Naive thymus-derived CD4-positive, alpha-beta T cell (primary cell): ENCODE measurements at regions of chr9 and their contacts with region 1.

Region 1: DNA sequence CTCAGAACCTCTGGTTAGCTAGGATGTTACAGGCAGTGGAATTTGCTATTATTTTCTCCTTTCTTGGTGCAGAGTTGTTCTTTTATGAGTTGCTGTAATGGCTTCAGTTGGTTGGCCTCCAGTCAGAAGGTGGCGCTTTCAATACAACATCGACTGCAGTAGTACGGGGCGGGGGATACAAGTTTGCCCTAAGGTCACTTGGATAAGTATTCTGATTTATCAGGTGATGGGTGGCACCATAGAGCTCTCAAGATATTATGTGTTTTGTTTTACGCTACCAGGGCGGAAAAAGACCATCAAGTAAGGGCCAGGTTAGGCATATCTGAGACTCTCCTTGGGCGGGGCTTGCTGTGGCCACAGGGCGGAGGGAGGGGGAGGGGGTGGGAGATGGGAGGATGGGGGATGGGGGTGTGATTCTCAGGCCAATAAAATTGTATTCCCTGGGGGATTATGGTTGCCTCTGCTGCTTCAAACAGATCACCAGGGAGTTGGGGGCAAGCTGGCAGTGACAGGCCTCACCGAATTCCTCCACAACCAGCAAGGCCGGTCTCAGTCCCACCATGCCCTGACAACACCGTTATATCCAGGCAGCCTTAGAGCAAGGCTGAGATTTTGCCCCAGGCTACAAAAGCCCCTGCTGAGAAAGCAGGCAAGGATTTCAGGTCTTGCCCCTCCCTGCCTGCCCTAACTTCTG is 15.9 kb upstream of the RNF38 start:
- DNase-seq: no peak
- ATAC-seq: no peak
- H3K4me3 ChIP-seq: no peak overlapping the region
- H3K4me3 Mint-ChIP-seq: no peak overlapping the region
- H3K27ac ChIP-seq: no peak overlapping the region
- H3K27ac Mint-ChIP-seq: peak overlapping the region in 5 of 9 donors; percentile 5 to 58 (median 36)
- H3K4me1 ChIP-seq: no peaks in the 10 kb centered on the region
- H3K4me1 Mint-ChIP-seq: peaks cover 5 to 43% (median 31%) of the 10 kb centered on the region in 7 donors
- H3K27me3 ChIP-seq: no peaks in the 10 kb centered on the region
- H3K27me3 Mint-ChIP-seq: no peaks in the 10 kb centered on the region

Region 2: DNA sequence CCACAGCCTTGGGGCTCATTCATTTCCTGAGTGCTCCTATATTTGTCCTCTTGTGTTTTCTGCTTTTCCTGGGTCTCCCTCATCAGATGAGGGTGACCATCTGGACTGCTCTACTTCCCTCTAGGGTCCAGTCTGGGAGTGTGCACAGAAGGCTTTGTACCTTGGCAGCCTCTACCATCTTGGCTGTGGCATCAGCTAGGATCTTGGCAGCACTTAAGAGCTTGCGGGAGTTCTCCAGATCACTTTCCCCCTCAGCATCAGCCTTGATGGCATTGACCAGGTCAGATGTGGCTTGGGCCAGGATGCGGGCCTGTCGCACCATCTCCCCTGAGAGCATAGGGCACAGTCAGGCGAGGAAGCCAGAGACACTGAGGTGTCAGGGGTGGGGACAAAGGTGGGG is 699.7 kb before region 1 on chr9:
- CTCF ChIA-PET with region 1: no interaction called
- POLR2A ChIA-PET with region 1: no interaction called
- intact Hi-C with region 1: no loop called
- DNase-seq: no peak
- ATAC-seq: no peak
- H3K4me3 ChIP-seq: no peak overlapping the region
- H3K4me3 Mint-ChIP-seq: no peak overlapping the region
- H3K27ac ChIP-seq: no peak overlapping the region
- H3K27ac Mint-ChIP-seq: peak overlapping the region in 4 of 9 donors; percentile 30 to 87 (median 77)
- H3K4me1 ChIP-seq: no peaks in the 10 kb centered on the region
- H3K4me1 Mint-ChIP-seq: peaks cover 0 to 5% (median 0%) of the 10 kb centered on the region in 7 donors
- H3K27me3 ChIP-seq: no peaks in the 10 kb centered on the region
- H3K27me3 Mint-ChIP-seq: no peaks in the 10 kb centered on the region

Region 3: GRCh38 chr9:36436909-36437308 is 20.9 kb after region 1 on chr9:
- CTCF ChIA-PET with region 1: interaction called, 10 read pairs
- POLR2A ChIA-PET with region 1: interaction called, 3 read pairs
- intact Hi-C with region 1: loop called in 1 of 2 experiments (anchors 2 kb)
- DNase-seq: no peak
- ATAC-seq: no peak
- H3K4me3 ChIP-seq: no peak overlapping the region
- H3K4me3 Mint-ChIP-seq: peak overlapping the region in 1 of 10 donors; percentile 41
- H3K27ac ChIP-seq: no peak overlapping the region
- H3K27ac Mint-ChIP-seq: peak overlapping the region in 3 of 9 donors; percentile 22 to 87 (median 64)
- H3K4me1 ChIP-seq: peaks cover 0 to 7% of the 10 kb centered on the region in 2 donors
- H3K4me1 Mint-ChIP-seq: peaks cover 13 to 66% (median 53%) of the 10 kb centered on the region in 7 donors
- H3K27me3 ChIP-seq: no peaks in the 10 kb centered on the region
- H3K27me3 Mint-ChIP-seq: no peaks in the 10 kb centered on the region

Region 4: DNA sequence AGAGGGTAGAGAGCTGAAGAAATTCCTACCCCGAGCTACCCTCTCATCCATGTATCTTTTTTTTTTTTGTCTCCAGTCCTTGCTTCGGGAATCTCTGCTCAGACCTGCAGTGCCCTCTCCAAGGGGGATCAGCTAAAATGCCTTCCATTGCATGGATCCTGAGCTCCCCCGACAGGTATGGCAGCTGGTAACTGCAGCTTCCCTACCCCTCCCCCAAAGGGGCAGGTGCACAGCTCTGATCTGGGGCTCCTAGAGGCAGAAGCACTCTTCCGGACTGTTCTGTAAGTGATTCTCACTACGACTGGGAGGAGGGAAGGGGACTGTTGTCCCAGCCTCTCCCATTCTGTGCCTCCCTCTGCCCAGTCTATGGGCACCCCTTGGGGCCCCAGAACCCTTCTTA is 326.3 kb after region 1 on chr9:
- CTCF ChIA-PET with region 1: no interaction called
- POLR2A ChIA-PET with region 1: no interaction called
- intact Hi-C with region 1: no loop called
- DNase-seq: no peak
- ATAC-seq: no peak
- H3K4me3 ChIP-seq: no peak overlapping the region
- H3K4me3 Mint-ChIP-seq: no peak overlapping the region
- H3K27ac ChIP-seq: no peak overlapping the region
- H3K27ac Mint-ChIP-seq: no peak overlapping the region
- H3K4me1 ChIP-seq: no peaks in the 10 kb centered on the region
- H3K4me1 Mint-ChIP-seq: peaks cover 0 to 7% (median 5%) of the 10 kb centered on the region in 7 donors
- H3K27me3 ChIP-seq: peaks cover 2 to 3% of the 10 kb centered on the region in 2 donors
- H3K27me3 Mint-ChIP-seq: peaks cover 31 to 66% (median 59%) of the 10 kb centered on the region in 5 donors